T-cell (primary cell): ENCODE measurements at regions of chr12 and their contacts with region 1.

Region 1: GRCh38 chr12:685388-685787 is 22.1 kb upstream of the NINJ2 start:
- DNase-seq: peak; percentile 60 to 94 (median 85)
- ATAC-seq: peak; percentile 97 to 100 (median 100)
- H3K4me3 ChIP-seq: no peak overlapping the region
- H3K4me3 Mint-ChIP-seq: peak overlapping the region; percentile 31 to 60 (median 47)
- H3K27ac ChIP-seq: peak overlapping the region; percentile 92
- H3K27ac Mint-ChIP-seq: peak overlapping the region; percentile 97
- H3K4me1 ChIP-seq: peaks cover 23 to 46% of the 10 kb centered on the region in 2 experiments
- H3K4me1 Mint-ChIP-seq: peaks cover 38 to 50% (median 46%) of the 10 kb centered on the region in 3 donors
- H3K27me3 ChIP-seq: no peaks in the 10 kb centered on the region
- H3K27me3 Mint-ChIP-seq: no peaks in the 10 kb centered on the region

Region 2: GRCh38 chr12:484117-484516 is 201.3 kb before region 1 on chr12:
- CTCF ChIA-PET with region 1: no interaction called
- POLR2A ChIA-PET with region 1: interaction called in 1 of 2 experiments, 12 read pairs
- DNase-seq: no peak
- ATAC-seq: no peak
- H3K4me3 ChIP-seq: no peak overlapping the region
- H3K4me3 Mint-ChIP-seq: no peak overlapping the region
- H3K27ac ChIP-seq: no peak overlapping the region
- H3K27ac Mint-ChIP-seq: no peak overlapping the region
- H3K4me1 ChIP-seq: no peaks in the 10 kb centered on the region
- H3K4me1 Mint-ChIP-seq: peaks cover 0 to 2% (median 0%) of the 10 kb centered on the region in 3 donors
- H3K27me3 ChIP-seq: peaks cover 0 to 37% of the 10 kb centered on the region in 2 experiments
- H3K27me3 Mint-ChIP-seq: peaks cover 33 to 38% of the 10 kb centered on the region in 2 donors

Region 3: GRCh38 chr12:538731-539539 is 146.5 kb before region 1 on chr12:
- CTCF ChIA-PET with region 1: no interaction called
- POLR2A ChIA-PET with region 1: interaction called in 1 of 2 experiments, 10 read pairs
- DNase-seq: peak in 34 of 35 experiments; percentile 35 to 86 (median 60)
- ATAC-seq: peak; percentile 96 to 99 (median 98)
- H3K4me3 ChIP-seq: peak overlapping the region in 1 of 2 donors; percentile 10
- H3K4me3 Mint-ChIP-seq: peak overlapping the region; percentile 8 to 54 (median 50)
- H3K27ac ChIP-seq: peak overlapping the region; percentile 64
- H3K27ac Mint-ChIP-seq: peak overlapping the region; percentile 71 to 82
- H3K4me1 ChIP-seq: peaks cover 16 to 34% of the 10 kb centered on the region in 2 experiments
- H3K4me1 Mint-ChIP-seq: peaks cover 22 to 39% (median 27%) of the 10 kb centered on the region in 3 donors
- H3K27me3 ChIP-seq: peaks cover 0 to 20% of the 10 kb centered on the region in 2 experiments
- H3K27me3 Mint-ChIP-seq: peaks cover 3% of the 10 kb centered on the region in 2 donors

Region 4: DNA sequence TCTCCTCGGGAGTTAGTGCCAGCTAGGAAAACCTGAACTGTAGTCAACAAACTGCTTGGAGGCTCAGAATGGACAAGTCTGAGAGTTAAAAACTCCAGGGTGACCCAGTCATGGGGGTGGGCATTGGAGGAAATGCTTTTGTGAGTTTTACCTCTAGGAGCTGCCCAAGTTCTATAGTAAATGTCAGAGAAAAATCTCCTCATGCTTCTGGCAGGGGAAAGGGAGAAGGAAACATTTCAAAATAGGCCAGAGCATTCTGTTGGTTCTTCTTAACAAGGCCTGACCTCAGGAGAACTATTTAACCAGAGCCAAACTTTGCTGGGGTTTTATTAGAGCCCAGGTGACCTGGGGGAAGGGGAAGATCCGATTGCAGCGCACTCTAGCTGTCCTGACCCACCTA is 34.4 kb before region 1 on chr12:
- CTCF ChIA-PET with region 1: no interaction called
- POLR2A ChIA-PET with region 1: no interaction called
- DNase-seq: peak in 1 of 35 experiments; percentile 42
- ATAC-seq: peak in 2 of 4 experiments; percentile 19 to 50
- H3K4me3 ChIP-seq: no peak overlapping the region
- H3K4me3 Mint-ChIP-seq: no peak overlapping the region
- H3K27ac ChIP-seq: no peak overlapping the region
- H3K27ac Mint-ChIP-seq: no peak overlapping the region
- H3K4me1 ChIP-seq: no peaks in the 10 kb centered on the region
- H3K4me1 Mint-ChIP-seq: peaks cover 4 to 23% (median 9%) of the 10 kb centered on the region in 3 donors
- H3K27me3 ChIP-seq: no peaks in the 10 kb centered on the region
- H3K27me3 Mint-ChIP-seq: no peaks in the 10 kb centered on the region

Region 5: DNA sequence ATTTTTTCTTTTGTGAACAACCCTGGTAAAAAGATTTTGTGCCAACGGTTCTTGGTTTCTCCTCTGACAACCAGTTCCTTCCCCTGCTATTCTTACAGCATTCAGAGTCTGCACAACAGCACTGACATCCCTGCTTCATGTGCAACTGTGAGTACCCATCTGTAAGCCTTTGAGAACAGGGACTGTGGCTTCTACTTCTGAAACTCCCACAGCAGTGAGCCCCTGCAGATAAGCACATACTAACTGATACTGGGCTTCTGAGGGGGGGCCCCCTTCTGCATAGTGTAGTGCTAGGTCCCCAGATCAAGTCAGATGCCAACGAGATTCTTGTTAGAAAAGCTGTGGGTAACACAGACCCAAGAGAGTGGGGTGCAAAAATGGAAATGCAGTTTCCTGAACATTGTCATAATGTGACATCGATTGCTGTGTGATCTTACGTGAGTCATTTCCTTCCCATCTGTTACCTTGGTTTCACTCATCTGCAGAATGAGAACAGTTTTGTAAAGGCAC is 11.1 kb before region 1 on chr12:
- CTCF ChIA-PET with region 1: interaction called in 1 of 2 experiments, 8 read pairs
- POLR2A ChIA-PET with region 1: interaction called, 5 to 21 read pairs
- DNase-seq: peak in 34 of 35 experiments; percentile 25 to 86 (median 63)
- ATAC-seq: peak; percentile 81 to 93 (median 90)
- H3K4me3 ChIP-seq: peak overlapping the region in 1 of 2 donors; percentile 5
- H3K4me3 Mint-ChIP-seq: peak overlapping the region; percentile 52 to 64 (median 63)
- H3K27ac ChIP-seq: peak overlapping the region; percentile 87
- H3K27ac Mint-ChIP-seq: peak overlapping the region; percentile 83 to 96
- H3K4me1 ChIP-seq: peaks cover 28 to 60% of the 10 kb centered on the region in 2 experiments
- H3K4me1 Mint-ChIP-seq: peaks cover 33 to 66% (median 60%) of the 10 kb centered on the region in 3 donors
- H3K27me3 ChIP-seq: no peaks in the 10 kb centered on the region
- H3K27me3 Mint-ChIP-seq: no peaks in the 10 kb centered on the region

Region 6: GRCh38 chr12:726281-727140 is 41.1 kb after region 1 on chr12:
- CTCF ChIA-PET with region 1: interaction called in 1 of 2 experiments, 4 read pairs
- POLR2A ChIA-PET with region 1: interaction called in 1 of 2 experiments, 13 read pairs
- DNase-seq: peak in 8 of 35 experiments; percentile 2 to 33 (median 12)
- ATAC-seq: peak in 3 of 4 experiments; percentile 28 to 65 (median 34)
- H3K4me3 ChIP-seq: no peak overlapping the region
- H3K4me3 Mint-ChIP-seq: peak overlapping the region in 1 of 3 donors; percentile 48
- H3K27ac ChIP-seq: peak overlapping the region; percentile 15
- H3K27ac Mint-ChIP-seq: peak overlapping the region; percentile 78 to 86
- H3K4me1 ChIP-seq: peaks cover 31 to 65% of the 10 kb centered on the region in 2 experiments
- H3K4me1 Mint-ChIP-seq: peaks cover 78 to 91% (median 82%) of the 10 kb centered on the region in 3 donors
- H3K27me3 ChIP-seq: no peaks in the 10 kb centered on the region
- H3K27me3 Mint-ChIP-seq: no peaks in the 10 kb centered on the region

Region 7: GRCh38 chr12:738712-739111 is 53.3 kb after region 1 on chr12:
- CTCF ChIA-PET with region 1: no interaction called
- POLR2A ChIA-PET with region 1: no interaction called
- DNase-seq: no peak
- ATAC-seq: no peak
- H3K4me3 ChIP-seq: no peak overlapping the region
- H3K4me3 Mint-ChIP-seq: no peak overlapping the region
- H3K27ac ChIP-seq: no peak overlapping the region
- H3K27ac Mint-ChIP-seq: no peak overlapping the region
- H3K4me1 ChIP-seq: peaks cover 6% of the 10 kb centered on the region in 2 experiments
- H3K4me1 Mint-ChIP-seq: peaks cover 5 to 7% (median 7%) of the 10 kb centered on the region in 3 donors
- H3K27me3 ChIP-seq: no peaks in the 10 kb centered on the region
- H3K27me3 Mint-ChIP-seq: no peaks in the 10 kb centered on the region